Activated CD4-positive, alpha-beta T cell treated with anti-CD3 and anti-CD28 coated beads, Interleukin-2, amount 10 ng/mL, durations not matched to agents 24 days and 14 days (primary cell): ENCODE measurements at regions of chr3 and their contacts with region 1.

Region 1: GRCh38 chr3:20185701-20186598 is at the start of gene SGO1:
- DNase-seq: peak; percentile 100
- H3K4me3 Mint-ChIP-seq: no peak within 1 kb of the TSS
- H3K27ac Mint-ChIP-seq: no peak within 1 kb of the TSS
- H3K4me1 Mint-ChIP-seq: peaks cover 17% of the 10 kb centered on the region
- H3K27me3 Mint-ChIP-seq: no peaks in the 10 kb centered on the region
- total RNA-seq, gene SGO1: 20.0 and 23.6 TPM in 2 replicates

Region 2: GRCh38 chr3:19885468-19885867 is 300.5 kb before region 1 on chr3:
- intact Hi-C with region 1: loop called (anchors 5 kb)
- DNase-seq: peak; percentile 63
- H3K4me3 Mint-ChIP-seq: no peak overlapping the region
- H3K27ac Mint-ChIP-seq: no peak overlapping the region
- H3K4me1 Mint-ChIP-seq: peaks cover 6% of the 10 kb centered on the region
- H3K27me3 Mint-ChIP-seq: no peaks in the 10 kb centered on the region

Region 3: DNA sequence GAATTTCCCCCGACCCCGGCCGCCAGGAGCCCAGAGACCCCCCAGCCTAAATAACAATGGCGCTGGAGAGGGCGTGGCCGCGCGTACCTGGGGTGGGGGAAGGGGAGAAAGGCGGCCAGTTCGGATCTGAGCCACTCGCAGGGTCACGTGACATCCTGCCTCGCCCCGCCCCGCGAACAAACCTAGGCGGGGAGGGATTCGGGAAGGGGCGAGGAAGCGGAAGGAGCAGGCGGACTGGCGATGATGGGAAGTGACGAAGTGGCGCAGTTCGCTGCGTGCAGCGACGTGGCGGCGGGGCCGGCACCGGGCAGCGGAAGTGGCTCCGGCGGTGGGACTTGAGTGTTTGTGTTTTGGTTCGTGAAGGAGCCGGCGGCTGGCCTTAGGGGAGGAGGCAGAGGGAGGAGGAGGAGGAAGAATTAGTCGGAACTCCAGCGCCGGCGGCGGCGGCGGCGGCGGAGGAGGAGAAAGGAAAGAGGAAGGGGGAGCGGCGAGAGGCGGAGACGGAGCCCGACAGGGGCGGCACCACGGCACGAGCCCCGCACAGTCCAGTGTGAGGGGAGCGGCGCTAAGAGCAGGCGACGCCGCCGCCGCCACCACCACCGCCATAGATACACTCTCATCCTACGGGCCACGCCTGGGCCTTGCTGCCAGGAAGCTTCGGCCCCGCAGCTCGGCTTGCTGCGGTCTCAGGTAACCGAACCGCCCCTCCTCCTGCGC is 239.0 kb before region 1 on chr3 and contains the start of gene RAB5A:
- intact Hi-C with region 1: loop called (anchors 1 kb)
- DNase-seq: peak; percentile 99
- H3K4me3 Mint-ChIP-seq: peak within 1 kb of the TSS; percentile 95
- H3K27ac Mint-ChIP-seq: peak within 1 kb of the TSS; percentile 99
- H3K4me1 Mint-ChIP-seq: peaks cover 30% of the 10 kb centered on the region
- H3K27me3 Mint-ChIP-seq: peaks cover 3% of the 10 kb centered on the region
- total RNA-seq, gene RAB5A: 58.7 and 60.5 TPM in 2 replicates

Region 4: DNA sequence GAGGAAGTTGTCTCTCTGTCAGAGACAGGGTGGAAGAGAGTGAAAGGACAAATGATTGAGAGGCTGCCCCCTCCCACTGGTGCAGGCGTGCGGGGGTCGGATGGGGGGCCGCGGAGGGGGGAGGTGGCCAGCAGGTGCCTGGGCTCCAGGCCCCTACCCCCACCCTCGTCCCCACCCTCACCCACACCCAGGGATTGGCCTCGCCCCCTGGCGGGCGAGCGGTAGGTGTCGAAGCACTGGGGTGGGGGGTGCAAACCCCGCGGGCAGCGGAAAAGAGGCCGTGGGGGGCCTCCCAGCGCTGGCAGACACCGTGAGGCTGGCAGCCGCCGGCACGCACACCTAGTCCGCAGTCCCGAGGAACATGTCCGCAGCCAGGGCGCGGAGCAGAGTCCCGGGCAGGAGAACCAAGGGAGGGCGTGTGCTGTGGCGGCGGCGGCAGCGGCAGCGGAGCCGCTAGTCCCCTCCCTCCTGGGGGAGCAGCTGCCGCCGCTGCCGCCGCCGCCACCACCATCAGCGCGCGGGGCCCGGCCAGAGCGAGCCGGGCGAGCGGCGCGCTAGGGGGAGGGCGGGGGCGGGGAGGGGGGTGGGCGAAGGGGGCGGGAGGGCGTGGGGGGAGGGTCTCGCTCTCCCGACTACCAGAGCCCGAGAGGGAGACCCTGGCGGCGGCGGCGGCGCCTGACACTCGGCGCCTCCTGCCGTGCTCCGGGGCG is 146.0 kb before region 1 on chr3 and contains the start of gene KAT2B:
- intact Hi-C with region 1: loop called (anchors 1 kb)
- DNase-seq: peak; percentile 94
- H3K4me3 Mint-ChIP-seq: peak within 1 kb of the TSS; percentile 96
- H3K27ac Mint-ChIP-seq: peak within 1 kb of the TSS; percentile 98
- H3K4me1 Mint-ChIP-seq: peaks cover 49% of the 10 kb centered on the region
- H3K27me3 Mint-ChIP-seq: no peaks in the 10 kb centered on the region
- total RNA-seq, gene KAT2B: 23.3 and 27.9 TPM in 2 replicates

Region 5: DNA sequence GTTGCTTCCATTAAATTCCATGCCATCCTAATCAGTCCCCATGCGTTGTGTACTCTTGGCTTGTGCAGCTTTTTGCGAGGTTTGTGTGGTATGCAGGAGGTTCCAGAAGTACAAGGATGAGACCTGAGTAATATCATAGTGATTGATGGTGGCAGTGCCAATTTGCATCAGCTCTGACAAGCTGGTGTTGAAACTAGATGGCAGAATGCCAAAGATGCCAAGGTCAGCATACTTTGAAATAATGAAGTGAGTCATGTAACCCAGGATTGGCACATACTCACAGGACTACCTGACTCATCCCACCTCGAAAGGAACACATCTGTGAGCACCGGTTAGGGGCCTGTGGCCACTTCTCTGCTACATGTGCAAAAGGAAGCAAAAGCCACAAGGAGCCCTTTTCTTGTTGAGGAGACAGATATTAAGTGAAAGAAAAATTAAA is 131.4 kb before region 1 on chr3:
- intact Hi-C with region 1: loop called (anchors 1 kb)
- DNase-seq: peak; percentile 84
- H3K4me3 Mint-ChIP-seq: no peak overlapping the region
- H3K27ac Mint-ChIP-seq: no peak overlapping the region
- H3K4me1 Mint-ChIP-seq: peaks cover 30% of the 10 kb centered on the region
- H3K27me3 Mint-ChIP-seq: no peaks in the 10 kb centered on the region

Region 6: GRCh38 chr3:20060974-20061685 is 124.8 kb before region 1 on chr3:
- intact Hi-C with region 1: loop called (anchors 1 kb)
- DNase-seq: peak; percentile 68
- H3K4me3 Mint-ChIP-seq: peak overlapping the region; percentile 52
- H3K27ac Mint-ChIP-seq: peak overlapping the region; percentile 69
- H3K4me1 Mint-ChIP-seq: peaks cover 37% of the 10 kb centered on the region
- H3K27me3 Mint-ChIP-seq: no peaks in the 10 kb centered on the region

Region 7: GRCh38 chr3:20104167-20104661 is 81.7 kb before region 1 on chr3:
- intact Hi-C with region 1: loop called (anchors 2 kb)
- DNase-seq: peak; percentile 86
- H3K4me3 Mint-ChIP-seq: peak overlapping the region; percentile 67
- H3K27ac Mint-ChIP-seq: peak overlapping the region; percentile 86
- H3K4me1 Mint-ChIP-seq: peaks cover 57% of the 10 kb centered on the region
- H3K27me3 Mint-ChIP-seq: no peaks in the 10 kb centered on the region